Activated T-helper 2 cell treated with anti-CD3 and anti-CD28 coated beads, Interferon-gamma antibody, Interleukin-2, Interleukin-4, amounts not matched to agents 10 μg/mL and 5 μg/mL and 100 μg/mL, durations not matched to agents 14 hours and 24 hours and 36 hours (primary cell): ENCODE measurements at regions of chr2 and their contacts with region 1.

Region 1: DNA sequence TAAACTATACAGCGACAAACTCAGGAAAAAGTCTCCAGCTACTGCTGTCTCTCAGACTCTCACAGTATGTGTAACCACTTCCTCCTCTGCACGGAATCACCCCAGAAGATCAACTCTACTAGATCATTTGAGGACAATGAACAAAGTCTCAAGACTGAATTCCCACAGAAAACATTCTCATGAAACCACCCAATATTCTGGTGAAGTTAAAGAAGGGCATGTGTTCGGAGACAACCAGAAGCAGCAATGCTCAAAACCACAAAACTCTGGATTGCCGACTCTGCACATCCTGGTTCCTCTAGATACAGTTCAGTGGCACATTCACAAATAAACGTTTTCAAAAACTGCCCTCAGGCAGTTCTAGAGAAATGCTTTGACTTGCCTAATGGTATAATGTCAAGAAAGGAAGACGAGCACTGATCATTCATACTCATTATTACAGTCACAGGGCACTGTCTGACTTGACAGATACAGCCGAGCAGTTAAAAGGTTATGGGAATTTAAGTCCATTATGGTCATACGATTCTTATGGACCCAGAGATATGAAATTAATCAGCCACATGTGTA is 91.9 kb upstream of the STK17B start:
- DNase-seq: peak; percentile 52
- H3K4me3 Mint-ChIP-seq: peak overlapping the region; percentile 72
- H3K27ac Mint-ChIP-seq: peak overlapping the region; percentile 94
- H3K4me1 Mint-ChIP-seq: peaks cover 68% of the 10 kb centered on the region
- H3K27me3 Mint-ChIP-seq: no peaks in the 10 kb centered on the region

Region 2: DNA sequence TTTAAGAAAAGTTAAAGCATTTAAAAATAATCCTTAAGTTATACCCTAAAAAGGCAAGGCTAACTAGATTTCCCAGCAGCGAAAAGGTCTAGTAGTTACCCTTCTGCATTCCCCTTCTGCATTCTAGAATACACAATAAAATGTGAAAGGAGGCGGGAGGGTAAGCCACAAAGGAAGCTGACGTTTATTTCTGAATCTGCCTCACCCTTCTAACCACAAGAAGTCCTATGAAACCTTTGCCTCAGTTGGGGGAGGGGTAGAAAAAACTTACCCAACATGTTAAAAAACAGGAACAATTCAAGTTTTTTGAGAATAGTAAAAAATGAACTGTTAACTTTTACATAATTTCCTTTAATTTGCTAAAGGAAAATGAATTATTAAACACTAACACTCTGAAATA is 103.2 kb before region 1 on chr2:
- intact Hi-C with region 1: loop called (anchors 1 kb)
- DNase-seq: peak; percentile 69
- H3K4me3 Mint-ChIP-seq: peak overlapping the region; percentile 55
- H3K27ac Mint-ChIP-seq: peak overlapping the region; percentile 87
- H3K4me1 Mint-ChIP-seq: peaks cover 60% of the 10 kb centered on the region
- H3K27me3 Mint-ChIP-seq: no peaks in the 10 kb centered on the region

Region 3: GRCh38 chr2:196205881-196206435 is 57.3 kb before region 1 on chr2:
- intact Hi-C with region 1: loop called (anchors 1 kb)
- DNase-seq: no peak
- H3K4me3 Mint-ChIP-seq: no peak overlapping the region
- H3K27ac Mint-ChIP-seq: no peak overlapping the region
- H3K4me1 Mint-ChIP-seq: peaks cover 41% of the 10 kb centered on the region
- H3K27me3 Mint-ChIP-seq: no peaks in the 10 kb centered on the region

Region 4: DNA sequence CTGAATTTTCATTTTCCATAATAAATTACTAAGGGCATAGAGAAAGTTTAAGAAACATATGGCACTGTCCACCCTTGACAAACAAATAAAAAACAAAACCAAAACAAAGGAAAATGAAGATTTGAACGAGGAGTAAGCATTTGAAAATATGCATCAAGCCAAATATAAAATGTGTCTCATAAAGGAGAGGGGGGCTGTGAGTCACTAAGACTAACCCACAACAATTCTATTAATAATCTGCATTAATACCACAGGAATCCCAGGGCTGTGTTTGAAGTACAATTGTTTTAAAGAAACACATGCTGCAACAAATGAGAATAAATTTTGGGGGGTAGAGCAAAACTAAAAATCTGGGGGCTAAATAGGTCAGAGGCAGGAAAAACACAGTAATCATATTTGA is 38.1 kb before region 1 on chr2:
- intact Hi-C with region 1: no loop called
- DNase-seq: no peak
- H3K4me3 Mint-ChIP-seq: no peak overlapping the region
- H3K27ac Mint-ChIP-seq: no peak overlapping the region
- H3K4me1 Mint-ChIP-seq: peaks cover 61% of the 10 kb centered on the region
- H3K27me3 Mint-ChIP-seq: no peaks in the 10 kb centered on the region

Region 5: DNA sequence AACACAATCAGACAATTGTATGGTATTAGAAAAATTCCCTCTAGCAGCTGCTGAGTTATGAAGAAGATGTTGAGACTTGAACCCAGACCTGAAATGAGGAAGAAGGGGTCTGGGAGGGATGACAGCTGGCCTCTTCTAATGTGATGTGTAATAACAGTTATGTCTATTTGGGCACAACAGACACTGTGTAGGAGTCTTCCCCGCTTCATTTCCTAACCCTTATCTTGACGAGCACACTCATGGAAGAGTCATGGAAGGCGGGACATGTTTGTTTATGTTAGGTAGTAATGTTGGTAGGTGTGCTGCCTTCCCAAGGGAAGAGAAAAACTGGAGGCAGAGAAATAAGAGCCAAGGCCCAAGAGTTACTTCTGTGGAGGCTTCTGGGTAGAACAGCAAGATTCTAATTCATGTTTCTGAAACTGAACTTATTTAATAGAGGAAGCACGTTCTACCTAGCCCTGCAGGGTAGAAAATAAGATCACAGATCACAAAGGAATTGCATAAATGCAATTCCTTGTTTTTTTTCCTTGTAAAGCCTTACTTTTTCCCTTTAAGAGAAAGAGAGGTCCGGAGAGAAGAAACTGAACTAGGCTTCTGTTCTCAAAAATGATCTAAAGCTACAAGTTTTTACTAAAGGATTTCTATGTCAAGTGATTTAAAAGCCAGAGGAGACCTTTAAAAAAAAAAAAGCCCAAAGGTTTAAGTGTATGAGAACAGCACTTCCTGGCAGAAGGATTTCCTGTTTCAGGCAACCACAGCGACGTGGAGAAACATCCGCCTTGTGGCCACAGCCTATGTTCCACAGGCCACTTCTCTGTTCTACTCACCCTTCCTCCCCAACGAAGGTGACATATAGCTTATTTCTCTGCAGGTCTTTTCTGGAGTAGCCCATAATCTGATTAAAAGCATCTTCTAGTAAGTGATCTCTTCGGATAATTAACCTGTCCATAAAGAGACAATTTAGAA is 23.4 kb before region 1 on chr2:
- intact Hi-C with region 1: loop called (anchors 1 kb)
- DNase-seq: peak; percentile 85
- H3K4me3 Mint-ChIP-seq: peak overlapping the region; percentile 62
- H3K27ac Mint-ChIP-seq: peak overlapping the region; percentile 97
- H3K4me1 Mint-ChIP-seq: peaks cover 66% of the 10 kb centered on the region
- H3K27me3 Mint-ChIP-seq: no peaks in the 10 kb centered on the region

Region 6: DNA sequence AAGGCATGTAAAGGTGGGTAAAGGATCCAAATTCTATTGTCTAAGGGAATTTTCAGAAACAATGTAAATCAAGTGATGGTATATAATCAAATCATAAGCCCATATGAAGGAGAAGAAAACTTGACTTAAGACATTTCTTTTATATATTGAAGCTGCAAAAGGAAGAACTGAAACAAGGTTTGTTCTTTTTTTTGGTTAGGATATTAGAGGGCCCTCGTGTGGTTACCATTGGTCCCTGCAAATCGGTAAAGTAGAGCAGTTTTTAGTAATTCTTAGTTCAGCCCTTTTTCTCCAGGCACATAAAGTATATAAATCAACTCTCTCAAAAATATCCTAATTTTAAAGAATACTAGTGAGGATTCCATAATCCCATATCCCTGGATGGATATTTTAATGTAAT is 13.7 kb after region 1 on chr2:
- intact Hi-C with region 1: loop called (anchors 1 kb)
- DNase-seq: no peak
- H3K4me3 Mint-ChIP-seq: no peak overlapping the region
- H3K27ac Mint-ChIP-seq: no peak overlapping the region
- H3K4me1 Mint-ChIP-seq: peaks cover 45% of the 10 kb centered on the region
- H3K27me3 Mint-ChIP-seq: no peaks in the 10 kb centered on the region

Region 7: DNA sequence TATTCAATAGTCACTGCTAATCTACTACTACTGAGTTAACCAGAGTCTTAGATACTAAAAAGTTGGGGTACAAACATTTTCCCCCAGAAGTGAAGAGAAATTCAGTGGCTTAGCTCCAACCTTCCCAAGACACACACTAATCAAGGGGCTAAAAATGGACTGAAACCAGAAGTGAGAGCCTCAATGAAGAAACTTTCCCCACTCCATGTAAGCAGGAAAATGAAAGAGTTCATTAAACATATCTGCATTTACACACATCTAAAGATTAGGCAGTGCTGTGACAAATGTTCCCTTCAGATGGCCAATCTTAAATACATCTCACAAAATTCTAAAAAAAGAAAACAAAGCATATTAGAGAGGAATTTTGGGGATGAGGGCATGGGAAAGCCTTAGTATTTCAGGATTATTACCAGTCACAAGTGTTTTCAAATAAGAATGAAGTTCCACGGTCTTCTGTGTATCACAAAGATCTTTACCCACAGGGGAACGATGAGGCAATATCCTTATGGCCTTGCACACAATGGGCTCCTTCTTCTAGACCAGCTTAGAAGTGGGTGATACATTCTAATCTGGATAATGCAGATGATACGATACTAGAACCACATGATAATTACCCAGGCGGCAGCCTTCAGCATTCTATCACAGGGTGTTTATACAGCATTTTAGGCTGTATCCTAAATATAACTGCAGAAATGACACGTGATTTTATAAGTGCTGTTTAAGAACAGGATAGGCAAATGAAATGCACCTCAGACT is 1030.2 kb after region 1 on chr2:
- intact Hi-C with region 1: loop called (anchors 10 kb)
- DNase-seq: no peak
- H3K4me3 Mint-ChIP-seq: peak overlapping the region; percentile 79
- H3K27ac Mint-ChIP-seq: peak overlapping the region; percentile 94
- H3K4me1 Mint-ChIP-seq: peaks cover 80% of the 10 kb centered on the region
- H3K27me3 Mint-ChIP-seq: no peaks in the 10 kb centered on the region